PC-3 (cell line): ENCODE measurements at regions of chr6 and their contacts with region 1.

Region 1: GRCh38 chr6:37137201-37138090 is 32.5 kb upstream of the PIM1 start:
- DNase-seq: peak; percentile 98
- ATAC-seq: peak; percentile 61
- H3K4me3 ChIP-seq: peak overlapping the region; percentile 37; the same call in 1 of the 2 replicates
- H3K27ac ChIP-seq: peak overlapping the region; percentile 99
- H3K4me1 ChIP-seq: peaks cover 69% of the 10 kb centered on the region
- H3K27me3 ChIP-seq: no peaks in the 10 kb centered on the region
- CTCF ChIP-seq: no peak

Region 2: GRCh38 chr6:36229223-36229622 is 908.2 kb before region 1 on chr6:
- CTCF ChIA-PET with region 1: no interaction called
- POLR2A ChIA-PET with region 1: interaction called, 12 read pairs
- intact Hi-C with region 1: no loop called
- DNase-seq: no peak
- ATAC-seq: no peak
- H3K4me3 ChIP-seq: no peak overlapping the region
- H3K27ac ChIP-seq: no peak overlapping the region
- H3K4me1 ChIP-seq: peaks cover 5% of the 10 kb centered on the region
- H3K27me3 ChIP-seq: no peaks in the 10 kb centered on the region
- CTCF ChIP-seq: no peak

Region 3: GRCh38 chr6:37102279-37103168 is 34.9 kb before region 1 on chr6:
- CTCF ChIA-PET with region 1: interaction called, 3 read pairs
- POLR2A ChIA-PET with region 1: interaction called, 23 read pairs
- intact Hi-C with region 1: loop called (anchors 1 kb)
- DNase-seq: peak; percentile 82
- ATAC-seq: peak; percentile 66
- H3K4me3 ChIP-seq: peak overlapping the region; percentile 59
- H3K27ac ChIP-seq: peak overlapping the region; percentile 78
- H3K4me1 ChIP-seq: peaks cover 38% of the 10 kb centered on the region
- H3K27me3 ChIP-seq: no peaks in the 10 kb centered on the region
- CTCF ChIP-seq: no peak